HEK293 (cell line): ENCODE measurements at regions of chr1 and their contacts with region 1.

Region 1: GRCh38 chr1:212078826-212079225 is 43.3 kb downstream of the DTL start:
- H3K4me3 ChIP-seq: no peak overlapping the region
- H3K27ac ChIP-seq: no peak overlapping the region
- H3K4me1 ChIP-seq: no peaks in the 10 kb centered on the region
- CTCF ChIP-seq: no peak

Region 2: GRCh38 chr1:212291505-212292134 is 212.8 kb after region 1 on chr1:
- CTCF ChIA-PET with region 1: interaction called, 10 read pairs
- POLR2A ChIA-PET with region 1: no interaction called
- H3K4me3 ChIP-seq: no peak overlapping the region
- H3K27ac ChIP-seq: no peak overlapping the region
- H3K4me1 ChIP-seq: peaks cover 15% of the 10 kb centered on the region; the same call in 1 of the 2 replicates
- CTCF ChIP-seq: peak; percentile 58